CD8-positive, alpha-beta T cell (primary cell): ENCODE measurements at regions of chr11 and their contacts with region 1.

Region 1: DNA sequence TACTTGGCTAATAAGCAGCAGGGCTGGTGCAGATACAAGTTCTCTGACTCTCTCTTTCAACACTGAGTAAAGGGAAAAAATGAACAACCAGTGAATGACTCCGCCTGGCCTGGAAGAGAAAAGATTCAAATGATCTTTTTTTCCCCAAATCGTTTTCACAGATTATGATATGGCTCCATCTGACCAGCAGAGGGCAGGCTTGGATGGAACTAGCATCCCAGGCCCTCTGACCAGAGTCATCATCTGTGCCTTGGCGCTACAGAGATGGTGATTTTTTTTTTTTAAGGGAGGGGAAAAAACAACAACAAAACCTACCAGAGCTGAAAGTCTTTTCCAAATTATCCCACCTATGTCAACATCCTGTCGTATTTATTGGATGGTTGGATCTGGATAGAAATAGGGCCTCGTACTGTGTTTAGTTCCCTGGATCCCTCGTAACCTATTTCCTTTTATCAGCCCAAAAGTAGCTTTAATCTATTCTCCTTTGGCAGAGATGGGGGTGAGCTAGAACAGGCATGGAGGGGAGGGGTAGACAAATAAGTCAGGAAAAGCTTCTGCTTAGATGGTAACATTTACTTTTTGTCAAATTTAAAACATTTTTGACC is 69.7 kb downstream of the PRSS23 start:
- DNase-seq: peak in 7 of 9 experiments; percentile 17 to 47 (median 23)
- ATAC-seq: no peak
- H3K4me3 ChIP-seq: no peak overlapping the region
- H3K4me3 Mint-ChIP-seq: no peak overlapping the region
- H3K27ac ChIP-seq: no peak overlapping the region
- H3K27ac Mint-ChIP-seq: no peak overlapping the region
- H3K4me1 ChIP-seq: no peaks in the 10 kb centered on the region
- H3K4me1 Mint-ChIP-seq: no peaks in the 10 kb centered on the region
- H3K27me3 ChIP-seq: no peaks in the 10 kb centered on the region
- H3K27me3 Mint-ChIP-seq: peaks cover 2% of the 10 kb centered on the region
- CTCF ChIP-seq: peak; percentile 67

Region 2: DNA sequence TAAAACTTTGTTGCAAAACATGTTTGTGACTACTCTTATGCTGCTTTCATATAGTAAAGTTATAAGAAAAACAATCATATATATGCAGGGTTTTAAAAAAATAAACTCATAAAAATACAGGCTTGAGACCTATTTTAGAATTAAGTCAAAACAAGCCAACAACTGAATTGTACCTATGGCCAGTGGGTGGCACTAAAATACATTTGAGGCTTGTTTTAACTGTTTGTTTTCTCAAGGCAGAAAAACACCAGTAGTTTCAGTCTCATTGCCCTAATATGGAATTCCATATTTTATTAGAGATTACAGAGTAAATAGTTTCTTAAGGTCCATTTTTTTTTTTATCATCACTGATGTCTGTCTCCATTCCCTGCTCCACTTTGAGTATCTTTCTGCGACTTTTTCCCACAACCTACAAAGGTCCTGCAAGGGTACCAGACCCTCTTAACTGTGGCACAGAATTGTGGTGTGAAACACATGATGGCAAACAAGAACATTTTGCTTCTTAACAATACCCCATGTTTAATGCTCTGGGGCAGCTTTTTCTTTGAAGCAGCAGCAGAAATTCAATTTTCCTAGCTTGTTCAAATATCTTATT is 1175.6 kb before region 1 on chr11:
- CTCF ChIA-PET with region 1: no interaction called
- POLR2A ChIA-PET with region 1: no interaction called
- intact Hi-C with region 1: no loop called
- DNase-seq: peak in 3 of 9 experiments; percentile 15 to 71 (median 59)
- ATAC-seq: peak; percentile 55
- H3K4me3 ChIP-seq: no peak overlapping the region
- H3K4me3 Mint-ChIP-seq: no peak overlapping the region
- H3K27ac ChIP-seq: no peak overlapping the region
- H3K27ac Mint-ChIP-seq: no peak overlapping the region
- H3K4me1 ChIP-seq: peaks cover 2% of the 10 kb centered on the region
- H3K4me1 Mint-ChIP-seq: peaks cover 7% of the 10 kb centered on the region
- H3K27me3 ChIP-seq: no peaks in the 10 kb centered on the region
- H3K27me3 Mint-ChIP-seq: no peaks in the 10 kb centered on the region
- CTCF ChIP-seq: peak; percentile 88

Region 3: GRCh38 chr11:86671682-86672621 is 198.1 kb before region 1 on chr11 and contains the start of gene ME3:
- CTCF ChIA-PET with region 1: no interaction called
- POLR2A ChIA-PET with region 1: no interaction called
- intact Hi-C with region 1: no loop called
- DNase-seq: peak in 6 of 9 experiments; percentile 2 to 74 (median 38)
- ATAC-seq: peak; percentile 91
- H3K4me3 ChIP-seq: peak within 1 kb of the TSS; percentile 72 to 75
- H3K4me3 Mint-ChIP-seq: peak within 1 kb of the TSS; percentile 82
- H3K27ac ChIP-seq: peak within 1 kb of the TSS; percentile 21 to 27
- H3K27ac Mint-ChIP-seq: peak within 1 kb of the TSS; percentile 34
- H3K4me1 ChIP-seq: peaks cover 5% of the 10 kb centered on the region
- H3K4me1 Mint-ChIP-seq: peaks cover 17% of the 10 kb centered on the region
- H3K27me3 ChIP-seq: no peaks in the 10 kb centered on the region
- H3K27me3 Mint-ChIP-seq: peaks cover 12% of the 10 kb centered on the region
- CTCF ChIP-seq: no peak
- total RNA-seq, gene ME3: 5.1 to 5.2 TPM

Region 4: DNA sequence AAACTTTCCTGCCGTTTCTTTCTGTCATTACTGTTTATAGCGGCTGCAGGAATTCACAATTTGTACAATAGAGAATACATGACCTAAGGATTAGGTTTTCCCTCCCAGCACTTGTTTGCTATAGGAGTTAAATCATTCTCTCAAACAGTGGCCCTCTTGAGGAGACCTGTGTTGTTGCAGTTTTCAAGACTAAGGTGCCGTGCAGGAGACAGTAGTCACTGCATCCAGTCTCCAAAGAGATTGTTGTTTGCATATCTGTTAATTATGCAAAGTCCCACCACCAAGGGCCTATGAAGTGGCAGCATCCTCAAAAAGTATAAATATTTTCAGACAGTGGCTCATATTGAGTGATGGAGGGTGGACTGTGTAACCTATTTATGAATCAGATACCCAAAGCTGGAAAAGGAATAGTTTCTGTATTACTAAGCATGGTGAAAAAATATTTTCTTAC is 67.4 kb before region 1 on chr11:
- CTCF ChIA-PET with region 1: no interaction called
- POLR2A ChIA-PET with region 1: no interaction called
- intact Hi-C with region 1: no loop called
- DNase-seq: peak in 2 of 9 experiments; percentile 26 to 47
- ATAC-seq: no peak
- H3K4me3 ChIP-seq: no peak overlapping the region
- H3K4me3 Mint-ChIP-seq: no peak overlapping the region
- H3K27ac ChIP-seq: no peak overlapping the region
- H3K27ac Mint-ChIP-seq: no peak overlapping the region
- H3K4me1 ChIP-seq: peaks cover 8% of the 10 kb centered on the region
- H3K4me1 Mint-ChIP-seq: peaks cover 7% of the 10 kb centered on the region
- H3K27me3 ChIP-seq: peaks cover 0 to 3% of the 10 kb centered on the region in 2 experiments
- H3K27me3 Mint-ChIP-seq: peaks cover 45% of the 10 kb centered on the region
- CTCF ChIP-seq: no peak

Region 5: DNA sequence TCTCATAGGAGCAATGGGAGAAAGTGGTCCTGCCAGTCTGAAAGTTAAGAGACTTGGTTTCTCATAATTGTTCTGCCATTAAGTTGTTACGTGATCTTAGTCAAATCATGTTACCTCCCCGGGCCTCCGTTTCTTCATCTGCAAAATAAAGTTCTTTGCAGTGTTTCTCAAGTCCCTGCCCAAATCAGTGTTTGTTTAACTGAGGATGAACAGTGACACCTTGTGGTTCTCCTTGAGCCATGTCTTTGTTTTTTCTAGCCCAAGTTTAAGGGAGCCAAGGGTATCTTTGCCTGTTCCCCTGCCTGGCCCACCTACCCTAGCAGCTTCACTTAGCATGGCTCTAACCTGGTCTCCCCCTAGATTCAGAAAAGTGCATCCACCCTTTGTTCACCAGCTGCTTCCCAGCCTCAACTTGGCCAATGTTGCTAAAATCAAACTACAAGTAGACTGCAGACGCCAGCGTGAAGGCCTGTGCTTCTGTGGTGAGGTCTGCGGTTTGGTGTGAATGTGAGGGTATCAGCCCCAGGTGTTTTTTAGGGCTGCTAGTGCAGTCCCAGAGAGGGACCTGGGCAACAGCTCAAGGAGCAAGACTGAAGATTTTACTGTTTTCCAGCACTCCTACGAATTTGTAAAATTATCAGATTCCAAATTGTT is 49.6 kb after region 1 on chr11:
- CTCF ChIA-PET with region 1: interaction called, 4 read pairs
- POLR2A ChIA-PET with region 1: no interaction called
- intact Hi-C with region 1: loop called in 1 of 2 experiments (anchors 5 kb)
- DNase-seq: peak in 2 of 9 experiments; percentile 30 to 35
- ATAC-seq: no peak
- H3K4me3 ChIP-seq: no peak overlapping the region
- H3K4me3 Mint-ChIP-seq: no peak overlapping the region
- H3K27ac ChIP-seq: no peak overlapping the region
- H3K27ac Mint-ChIP-seq: no peak overlapping the region
- H3K4me1 ChIP-seq: peaks cover 5% of the 10 kb centered on the region
- H3K4me1 Mint-ChIP-seq: no peaks in the 10 kb centered on the region
- H3K27me3 ChIP-seq: no peaks in the 10 kb centered on the region
- H3K27me3 Mint-ChIP-seq: no peaks in the 10 kb centered on the region
- CTCF ChIP-seq: no peak

Region 6: GRCh38 chr11:87037450-87038234 is 167.6 kb after region 1 on chr11 and contains the start of gene TMEM135:
- CTCF ChIA-PET with region 1: no interaction called
- POLR2A ChIA-PET with region 1: no interaction called
- intact Hi-C with region 1: no loop called
- DNase-seq: peak; percentile 83 to 96 (median 90)
- ATAC-seq: peak; percentile 94
- H3K4me3 ChIP-seq: peak within 1 kb of the TSS; percentile 85 to 93
- H3K4me3 Mint-ChIP-seq: peak within 1 kb of the TSS; percentile 99
- H3K27ac ChIP-seq: peak within 1 kb of the TSS; percentile 67 to 88
- H3K27ac Mint-ChIP-seq: peak within 1 kb of the TSS; percentile 96
- H3K4me1 ChIP-seq: peaks cover 20% of the 10 kb centered on the region
- H3K4me1 Mint-ChIP-seq: peaks cover 51% of the 10 kb centered on the region
- H3K27me3 ChIP-seq: no peaks in the 10 kb centered on the region
- H3K27me3 Mint-ChIP-seq: no peaks in the 10 kb centered on the region
- CTCF ChIP-seq: no peak
- total RNA-seq, gene TMEM135: 11.0 to 13.7 TPM